T-cell (primary cell): ENCODE measurements at regions of chr2 and their contacts with region 1.

Region 1: DNA sequence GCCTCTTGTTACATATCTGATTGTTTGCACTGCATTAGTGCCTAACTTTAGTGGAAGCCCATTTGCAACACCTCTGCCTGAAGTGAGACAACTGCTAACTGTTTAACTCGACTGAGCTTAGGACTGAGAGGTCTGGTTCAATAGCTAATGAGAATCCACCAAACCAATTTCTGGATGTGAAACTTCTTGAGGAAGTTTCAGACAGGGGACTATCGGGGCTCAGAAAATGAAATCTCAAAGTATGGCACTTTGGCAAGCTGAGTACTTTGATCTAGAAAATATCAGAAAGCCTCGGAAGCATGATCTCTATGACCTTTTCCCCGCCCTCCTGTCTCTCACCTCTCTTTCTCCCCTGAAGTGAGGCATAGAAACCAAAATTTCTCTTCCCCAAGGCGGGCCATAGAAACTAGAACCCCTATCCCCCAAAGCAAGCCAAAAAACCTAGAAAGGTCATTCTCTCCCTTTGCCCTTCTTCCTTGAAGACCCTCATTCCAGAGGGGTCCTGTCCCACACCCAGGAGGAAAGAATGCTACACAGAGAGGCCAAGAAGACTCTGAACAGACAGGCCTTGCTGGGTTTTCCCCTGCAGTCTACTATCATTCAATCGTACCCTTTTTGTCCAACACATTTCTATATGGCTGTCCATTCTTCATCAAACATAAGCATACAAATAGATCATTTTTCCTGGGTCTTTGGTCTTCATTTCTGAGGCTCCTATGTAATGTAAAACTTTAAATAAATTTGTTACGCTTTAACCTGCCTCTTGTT is 69.6 kb upstream of the CREB1 start:
- DNase-seq: no peak
- ATAC-seq: no peak
- H3K4me3 ChIP-seq: no peak overlapping the region
- H3K4me3 Mint-ChIP-seq: no peak overlapping the region
- H3K27ac ChIP-seq: no peak overlapping the region
- H3K27ac Mint-ChIP-seq: no peak overlapping the region
- H3K4me1 ChIP-seq: peaks cover 0 to 3% of the 10 kb centered on the region in 2 experiments
- H3K4me1 Mint-ChIP-seq: peaks cover 0 to 16% (median 9%) of the 10 kb centered on the region in 3 donors
- H3K27me3 ChIP-seq: no peaks in the 10 kb centered on the region
- H3K27me3 Mint-ChIP-seq: no peaks in the 10 kb centered on the region

Region 2: DNA sequence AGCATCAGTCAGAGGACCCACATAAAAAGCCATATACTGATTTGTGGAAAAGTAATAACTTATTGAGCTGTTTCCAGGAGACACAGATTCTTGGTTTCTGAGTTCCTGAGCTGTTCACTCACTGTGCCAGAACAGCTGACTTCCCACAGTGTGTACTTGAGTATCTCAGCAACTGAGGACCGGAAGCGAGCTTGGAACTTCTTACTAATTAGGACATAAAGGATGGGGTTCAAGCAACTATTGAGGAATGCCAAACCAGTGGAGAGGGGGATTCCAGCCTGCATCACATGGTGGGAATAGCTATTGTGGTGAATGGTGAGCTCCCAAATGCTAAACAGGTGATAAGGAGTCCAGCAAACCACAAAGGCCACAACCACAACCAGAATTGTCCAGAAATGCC is 1284.1 kb before region 1 on chr2:
- CTCF ChIA-PET with region 1: no interaction called
- POLR2A ChIA-PET with region 1: no interaction called
- DNase-seq: no peak
- ATAC-seq: no peak
- H3K4me3 ChIP-seq: no peak overlapping the region
- H3K4me3 Mint-ChIP-seq: no peak overlapping the region
- H3K27ac ChIP-seq: no peak overlapping the region
- H3K27ac Mint-ChIP-seq: no peak overlapping the region
- H3K4me1 ChIP-seq: no peaks in the 10 kb centered on the region
- H3K4me1 Mint-ChIP-seq: no peaks in the 10 kb centered on the region
- H3K27me3 ChIP-seq: peaks cover 0 to 2% of the 10 kb centered on the region in 2 experiments
- H3K27me3 Mint-ChIP-seq: peaks cover 2 to 5% of the 10 kb centered on the region in 2 donors

Region 3: GRCh38 chr2:207008105-207008990 is 451.8 kb before region 1 on chr2:
- CTCF ChIA-PET with region 1: no interaction called
- POLR2A ChIA-PET with region 1: no interaction called
- DNase-seq: no peak
- ATAC-seq: no peak
- H3K4me3 ChIP-seq: no peak overlapping the region
- H3K4me3 Mint-ChIP-seq: no peak overlapping the region
- H3K27ac ChIP-seq: no peak overlapping the region
- H3K27ac Mint-ChIP-seq: no peak overlapping the region
- H3K4me1 ChIP-seq: no peaks in the 10 kb centered on the region
- H3K4me1 Mint-ChIP-seq: no peaks in the 10 kb centered on the region
- H3K27me3 ChIP-seq: no peaks in the 10 kb centered on the region
- H3K27me3 Mint-ChIP-seq: peaks cover 0 to under 1% of the 10 kb centered on the region in 2 donors

Region 4: DNA sequence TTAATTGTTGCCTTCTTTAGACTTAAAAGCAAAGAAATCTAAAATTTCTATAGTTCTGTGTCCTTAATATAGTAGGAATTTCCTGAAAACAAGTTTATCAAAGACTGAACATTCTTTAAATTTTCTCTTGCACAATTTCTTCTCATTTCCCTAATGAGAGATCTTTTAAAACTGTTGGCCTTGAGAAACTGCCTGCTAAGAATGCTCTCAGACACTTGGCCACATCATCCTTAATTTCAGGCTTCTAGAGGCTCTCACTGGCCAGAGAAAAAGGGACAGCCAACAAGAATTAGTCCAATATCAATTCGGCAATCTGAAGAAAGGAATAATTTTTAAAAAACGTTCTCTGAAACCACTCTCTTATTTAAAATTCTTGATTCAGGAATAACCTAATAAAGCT is 97.5 kb before region 1 on chr2:
- CTCF ChIA-PET with region 1: interaction called in 1 of 2 experiments, 11 read pairs
- POLR2A ChIA-PET with region 1: no interaction called
- DNase-seq: no peak
- ATAC-seq: no peak
- H3K4me3 ChIP-seq: no peak overlapping the region
- H3K4me3 Mint-ChIP-seq: no peak overlapping the region
- H3K27ac ChIP-seq: no peak overlapping the region
- H3K27ac Mint-ChIP-seq: no peak overlapping the region
- H3K4me1 ChIP-seq: no peaks in the 10 kb centered on the region
- H3K4me1 Mint-ChIP-seq: no peaks in the 10 kb centered on the region
- H3K27me3 ChIP-seq: no peaks in the 10 kb centered on the region
- H3K27me3 Mint-ChIP-seq: no peaks in the 10 kb centered on the region